CD8-positive, alpha-beta T cell (primary cell): ENCODE measurements at regions of chr19 and their contacts with region 1.

Region 1: DNA sequence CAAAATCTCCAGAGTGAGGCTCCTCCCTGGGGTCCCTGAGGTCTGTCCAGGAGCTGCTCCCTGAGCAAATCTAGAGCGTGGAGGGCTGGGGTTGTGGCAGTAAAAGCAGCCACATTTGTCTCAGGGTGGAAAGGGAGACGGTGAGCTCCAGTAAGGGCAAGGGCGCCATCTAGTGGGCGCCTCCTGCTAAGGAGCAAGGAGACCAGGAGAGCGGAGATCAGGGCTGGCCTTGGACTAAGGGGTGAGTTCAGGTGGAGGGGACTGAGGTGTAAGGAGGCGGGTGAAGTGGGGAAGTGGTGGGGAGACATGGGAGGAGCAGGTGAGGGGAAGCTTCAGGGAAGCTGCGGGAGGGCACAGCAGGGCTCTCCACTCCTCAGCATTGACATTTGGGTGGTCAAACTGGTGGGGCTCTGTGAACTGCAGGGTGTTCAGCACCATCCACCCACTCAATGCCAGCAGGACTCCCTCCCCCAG is 5.3 kb upstream of the CEACAM21 start:
- DNase-seq: peak; percentile 68 to 90 (median 83)
- ATAC-seq: peak; percentile 99
- H3K4me3 ChIP-seq: no peak overlapping the region
- H3K4me3 Mint-ChIP-seq: no peak overlapping the region
- H3K27ac ChIP-seq: no peak overlapping the region
- H3K27ac Mint-ChIP-seq: peak overlapping the region; percentile 28
- H3K4me1 ChIP-seq: peaks cover 37% of the 10 kb centered on the region
- H3K4me1 Mint-ChIP-seq: peaks cover 27% of the 10 kb centered on the region
- H3K27me3 ChIP-seq: no peaks in the 10 kb centered on the region
- H3K27me3 Mint-ChIP-seq: peaks cover 24% of the 10 kb centered on the region
- CTCF ChIP-seq: peak; percentile 81

Region 2: GRCh38 chr19:41449079-41449864 is 121.4 kb before region 1 on chr19:
- CTCF ChIA-PET with region 1: interaction called, 122 read pairs
- POLR2A ChIA-PET with region 1: no interaction called
- intact Hi-C with region 1: loop called (anchors 1 kb)
- DNase-seq: peak; percentile 49 to 86 (median 71)
- ATAC-seq: peak; percentile 87
- H3K4me3 ChIP-seq: peak overlapping the region; percentile 23 to 37
- H3K4me3 Mint-ChIP-seq: peak overlapping the region; percentile 73
- H3K27ac ChIP-seq: no peak overlapping the region
- H3K27ac Mint-ChIP-seq: no peak overlapping the region
- H3K4me1 ChIP-seq: peaks cover 5% of the 10 kb centered on the region
- H3K4me1 Mint-ChIP-seq: peaks cover 5% of the 10 kb centered on the region
- H3K27me3 ChIP-seq: peaks cover 0 to 8% of the 10 kb centered on the region in 2 experiments
- H3K27me3 Mint-ChIP-seq: peaks cover 13% of the 10 kb centered on the region
- CTCF ChIP-seq: peak; percentile 99

Region 3: DNA sequence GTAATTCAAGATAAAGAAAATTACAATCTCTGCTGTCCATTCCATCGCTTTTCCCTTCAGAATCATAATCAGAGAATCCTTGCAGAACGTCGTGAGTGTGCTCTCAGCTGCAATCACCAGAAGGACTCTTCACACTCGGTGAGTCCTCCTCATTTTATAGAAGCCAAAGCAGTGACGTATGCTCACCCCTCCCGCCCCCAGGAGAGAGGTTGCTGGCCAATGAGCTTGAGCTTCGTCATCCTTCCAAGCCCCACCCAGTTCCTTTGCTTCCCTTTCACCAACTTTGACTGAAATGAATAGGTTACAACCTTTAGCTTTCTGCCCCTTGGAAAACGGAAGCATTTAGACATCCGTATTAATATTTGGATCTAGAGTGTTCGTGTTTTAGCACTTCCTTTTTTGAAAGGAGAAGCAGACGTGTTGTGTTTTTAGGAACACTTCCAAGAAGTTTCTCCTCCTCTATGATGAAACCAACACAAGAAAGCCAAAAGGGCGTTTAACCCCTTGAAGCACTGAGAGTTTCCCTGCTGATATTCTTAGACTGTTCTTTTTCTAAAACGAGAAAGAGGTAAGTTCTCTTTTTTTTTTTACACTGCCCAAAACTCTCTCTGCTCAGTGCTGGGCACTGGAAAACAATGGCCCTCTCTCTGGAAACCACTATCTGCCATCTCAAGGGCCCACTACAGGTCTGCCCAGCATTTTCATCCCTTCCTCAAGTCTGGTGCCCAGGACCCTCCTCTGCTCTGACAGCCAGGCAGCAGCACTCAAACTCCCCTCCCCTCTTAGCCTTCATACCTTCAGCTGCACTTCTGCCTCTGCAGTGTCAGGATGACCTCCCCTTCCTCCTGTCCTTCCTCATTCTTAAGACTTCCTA is 39.0 kb before region 1 on chr19:
- CTCF ChIA-PET with region 1: interaction called, 10 read pairs
- POLR2A ChIA-PET with region 1: interaction called, 4 read pairs
- intact Hi-C with region 1: loop called in 1 of 2 experiments (anchors 5 kb)
- DNase-seq: peak; percentile 45 to 92 (median 80)
- ATAC-seq: peak; percentile 95
- H3K4me3 ChIP-seq: peak overlapping the region; percentile 23 to 40
- H3K4me3 Mint-ChIP-seq: peak overlapping the region; percentile 72
- H3K27ac ChIP-seq: peak overlapping the region; percentile 43 to 61
- H3K27ac Mint-ChIP-seq: peak overlapping the region; percentile 86
- H3K4me1 ChIP-seq: peaks cover 47% of the 10 kb centered on the region
- H3K4me1 Mint-ChIP-seq: peaks cover 48% of the 10 kb centered on the region
- H3K27me3 ChIP-seq: no peaks in the 10 kb centered on the region
- H3K27me3 Mint-ChIP-seq: peaks cover 26% of the 10 kb centered on the region
- CTCF ChIP-seq: no peak

Region 4: GRCh38 chr19:41548954-41549688 is 21.6 kb before region 1 on chr19:
- CTCF ChIA-PET with region 1: interaction called, 33 read pairs
- POLR2A ChIA-PET with region 1: interaction called, 15 read pairs
- intact Hi-C with region 1: no loop called
- DNase-seq: peak; percentile 40 to 88 (median 80)
- ATAC-seq: peak; percentile 62
- H3K4me3 ChIP-seq: peak overlapping the region; percentile 64 to 67
- H3K4me3 Mint-ChIP-seq: peak overlapping the region; percentile 94
- H3K27ac ChIP-seq: peak overlapping the region; percentile 69 to 72
- H3K27ac Mint-ChIP-seq: peak overlapping the region; percentile 92
- H3K4me1 ChIP-seq: peaks cover 57% of the 10 kb centered on the region
- H3K4me1 Mint-ChIP-seq: peaks cover 56% of the 10 kb centered on the region
- H3K27me3 ChIP-seq: no peaks in the 10 kb centered on the region
- H3K27me3 Mint-ChIP-seq: peaks cover 2% of the 10 kb centered on the region
- CTCF ChIP-seq: no peak

Region 5: GRCh38 chr19:41597600-41598041 is 26.9 kb after region 1 on chr19:
- CTCF ChIA-PET with region 1: interaction called, 47 read pairs
- POLR2A ChIA-PET with region 1: no interaction called
- intact Hi-C with region 1: no loop called
- DNase-seq: peak; percentile 52 to 84 (median 73)
- ATAC-seq: peak; percentile 86
- H3K4me3 ChIP-seq: no peak overlapping the region
- H3K4me3 Mint-ChIP-seq: no peak overlapping the region
- H3K27ac ChIP-seq: no peak overlapping the region
- H3K27ac Mint-ChIP-seq: no peak overlapping the region
- H3K4me1 ChIP-seq: no peaks in the 10 kb centered on the region
- H3K4me1 Mint-ChIP-seq: peaks cover 6% of the 10 kb centered on the region
- H3K27me3 ChIP-seq: no peaks in the 10 kb centered on the region
- H3K27me3 Mint-ChIP-seq: peaks cover 42% of the 10 kb centered on the region
- CTCF ChIP-seq: peak; percentile 92